ENCODE measurements at regions of chr19 and their contacts with region 1.

Region 1: DNA sequence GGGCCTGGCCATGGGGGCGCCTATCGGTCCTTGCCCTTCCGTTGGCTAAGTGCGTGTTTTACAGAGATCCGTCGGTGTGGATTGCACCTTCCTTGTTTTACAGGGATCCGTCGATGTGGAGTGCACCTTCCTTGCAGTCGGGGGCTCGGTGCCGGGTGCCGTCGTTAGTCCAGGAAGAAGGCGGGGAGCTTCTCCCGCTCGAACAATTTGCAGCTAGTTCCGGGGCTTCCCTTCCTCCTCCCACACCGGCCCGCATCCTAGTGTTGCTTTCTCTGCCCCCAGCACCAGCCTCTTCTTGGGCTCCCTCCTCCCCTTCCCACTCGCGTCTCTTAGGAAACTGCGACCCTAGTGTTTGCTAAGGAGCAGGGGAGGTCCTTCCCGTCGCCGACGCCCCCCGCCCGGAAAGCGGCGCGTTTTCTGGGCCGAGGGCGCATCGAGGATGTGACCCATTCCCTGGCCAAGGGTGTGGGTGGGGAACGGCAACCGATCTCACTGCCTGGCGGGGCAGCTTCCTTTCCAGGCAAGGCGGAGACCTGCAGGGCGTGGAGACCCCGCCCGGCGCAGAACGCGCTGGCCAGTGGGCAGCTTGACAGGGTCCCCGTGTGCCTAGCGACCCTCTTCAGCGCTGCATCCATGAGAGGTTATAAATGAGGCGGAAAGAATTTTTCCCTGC is 75.7 kb upstream of the ZNF91 start:
- DNase-seq: no peak
- ATAC-seq: no peak
- H3K4me3 ChIP-seq: no peak overlapping the region
- H3K27ac ChIP-seq: no peak overlapping the region
- H3K4me1 ChIP-seq: no peaks in the 10 kb centered on the region
- H3K27me3 ChIP-seq: no peaks in the 10 kb centered on the region
- CTCF ChIP-seq: no peak
- EP300 ChIP-seq: no peak
- POLR2A ChIP-seq: no peak
- RAD21 ChIP-seq: no peak

Region 2: GRCh38 chr19:23321948-23322549 is 149.0 kb before region 1 on chr19:
- CTCF ChIA-PET with region 1: no interaction called
- POLR2A ChIA-PET with region 1: no interaction called
- RAD21 ChIA-PET with region 1: no interaction called
- SMC1A ChIA-PET with region 1: no interaction called
- in situ Hi-C with region 1: loop called (anchors 5 kb)
- intact Hi-C with region 1: no loop called
- DNase-seq: no peak
- ATAC-seq: no peak
- H3K4me3 ChIP-seq: no peak overlapping the region
- H3K27ac ChIP-seq: no peak overlapping the region
- H3K4me1 ChIP-seq: no peaks in the 10 kb centered on the region
- H3K27me3 ChIP-seq: no peaks in the 10 kb centered on the region
- CTCF ChIP-seq: no peak
- EP300 ChIP-seq: no peak
- POLR2A ChIP-seq: no peak
- RAD21 ChIP-seq: no peak

Region 3: DNA sequence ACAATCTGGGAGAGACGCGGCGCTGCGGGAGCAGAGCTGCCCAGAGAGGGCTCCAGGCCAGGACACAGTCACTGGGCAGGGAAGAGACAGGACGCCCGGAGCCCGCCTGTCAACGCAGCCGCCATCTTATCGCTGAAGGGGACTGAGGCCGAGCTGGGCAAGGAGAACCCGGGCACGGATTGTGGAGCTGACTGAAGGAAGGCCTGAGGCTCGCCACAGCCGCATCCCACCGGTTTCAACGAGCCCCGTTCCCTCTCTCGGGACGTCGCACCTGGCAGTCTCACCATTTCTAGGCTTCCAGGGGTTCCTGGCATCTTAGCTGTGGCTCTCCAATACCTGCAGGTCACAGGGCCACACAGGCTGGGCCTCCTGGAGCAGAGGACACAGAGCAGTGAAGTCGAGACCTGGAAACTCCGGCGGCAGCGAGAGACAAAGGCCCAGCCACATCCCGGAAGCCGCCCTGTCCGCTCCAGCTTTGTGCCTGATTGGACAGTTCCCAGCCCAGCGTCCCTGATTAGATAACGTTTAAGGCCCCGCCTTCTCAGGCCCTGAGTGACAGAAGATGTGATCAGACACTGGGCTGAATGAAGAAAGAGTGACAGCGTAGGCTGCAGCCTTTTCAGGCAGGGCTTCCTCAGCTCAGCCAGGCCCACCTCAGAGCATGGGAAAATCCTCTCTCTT is 75.8 kb before region 1 on chr19 and contains the start of gene ZNF91:
- CTCF ChIA-PET with region 1: no interaction called
- POLR2A ChIA-PET with region 1: no interaction called
- RAD21 ChIA-PET with region 1: no interaction called
- SMC1A ChIA-PET with region 1: no interaction called
- in situ Hi-C with region 1: no loop called
- intact Hi-C with region 1: no loop called
- DNase-seq: peak; percentile 85
- ATAC-seq: peak; percentile 97
- H3K4me3 ChIP-seq: peak within 1 kb of the TSS; percentile 77
- H3K27ac ChIP-seq: peak within 1 kb of the TSS; percentile 96
- H3K4me1 ChIP-seq: no peaks in the 10 kb centered on the region
- H3K27me3 ChIP-seq: no peaks in the 10 kb centered on the region
- CTCF ChIP-seq: no peak
- EP300 ChIP-seq: no peak
- POLR2A ChIP-seq: peak; percentile 96
- RAD21 ChIP-seq: no peak
- polyA plus RNA-seq, gene ZNF91: 4.6 to 5.1 TPM